PC-9 (cell line): ENCODE measurements at regions of chr13 and their contacts with region 1.

Region 1: GRCh38 chr13:40682449-40683240 is 16.2 kb upstream of the FOXO1 start:
- DNase-seq: no peak
- H3K4me3 ChIP-seq: no peak overlapping the region
- H3K27ac ChIP-seq: no peak overlapping the region
- H3K4me1 ChIP-seq: no peaks in the 10 kb centered on the region
- H3K27me3 ChIP-seq: no peaks in the 10 kb centered on the region
- CTCF ChIP-seq: peak; percentile 80

Region 2: DNA sequence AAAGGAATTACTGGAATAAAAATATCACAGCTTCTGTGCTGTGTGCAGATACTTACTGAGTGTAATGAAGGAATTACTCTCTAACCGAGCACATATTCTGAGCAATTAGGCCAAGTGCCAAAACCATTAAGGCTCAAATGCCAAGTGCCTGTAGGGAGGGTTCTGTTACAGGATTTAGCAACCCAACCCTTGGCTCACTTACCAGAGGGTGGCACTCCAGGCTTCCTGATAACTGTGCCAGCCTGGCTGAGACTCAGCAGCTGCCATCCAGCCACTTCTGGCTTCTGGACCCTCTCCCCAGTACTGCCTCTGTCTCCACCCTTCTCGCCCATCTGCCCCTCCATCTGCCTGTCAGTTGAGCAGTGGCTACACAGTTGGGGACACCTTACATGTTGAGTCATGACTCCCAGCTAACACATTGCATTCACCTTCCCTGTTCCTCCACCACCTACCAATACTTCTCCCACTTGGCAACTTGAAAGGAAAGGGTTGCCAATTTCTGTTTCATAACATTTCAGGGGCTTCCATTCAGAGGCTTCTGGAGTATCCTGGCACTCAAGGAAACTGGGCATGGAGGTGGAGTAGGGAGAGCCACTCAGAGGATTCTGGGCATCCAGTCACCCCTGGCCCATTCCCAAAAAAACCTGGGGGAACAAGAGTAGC is 916.7 kb before region 1 on chr13:
- CTCF ChIA-PET with region 1: no interaction called
- POLR2A ChIA-PET with region 1: no interaction called
- intact Hi-C with region 1: loop called (anchors 5 kb)
- DNase-seq: peak in 1 of 2 experiments; percentile 15
- H3K4me3 ChIP-seq: no peak overlapping the region
- H3K27ac ChIP-seq: no peak overlapping the region
- H3K4me1 ChIP-seq: no peaks in the 10 kb centered on the region
- H3K27me3 ChIP-seq: no peaks in the 10 kb centered on the region
- CTCF ChIP-seq: peak; percentile 39; the same call in 1 of the 2 replicates

Region 3: DNA sequence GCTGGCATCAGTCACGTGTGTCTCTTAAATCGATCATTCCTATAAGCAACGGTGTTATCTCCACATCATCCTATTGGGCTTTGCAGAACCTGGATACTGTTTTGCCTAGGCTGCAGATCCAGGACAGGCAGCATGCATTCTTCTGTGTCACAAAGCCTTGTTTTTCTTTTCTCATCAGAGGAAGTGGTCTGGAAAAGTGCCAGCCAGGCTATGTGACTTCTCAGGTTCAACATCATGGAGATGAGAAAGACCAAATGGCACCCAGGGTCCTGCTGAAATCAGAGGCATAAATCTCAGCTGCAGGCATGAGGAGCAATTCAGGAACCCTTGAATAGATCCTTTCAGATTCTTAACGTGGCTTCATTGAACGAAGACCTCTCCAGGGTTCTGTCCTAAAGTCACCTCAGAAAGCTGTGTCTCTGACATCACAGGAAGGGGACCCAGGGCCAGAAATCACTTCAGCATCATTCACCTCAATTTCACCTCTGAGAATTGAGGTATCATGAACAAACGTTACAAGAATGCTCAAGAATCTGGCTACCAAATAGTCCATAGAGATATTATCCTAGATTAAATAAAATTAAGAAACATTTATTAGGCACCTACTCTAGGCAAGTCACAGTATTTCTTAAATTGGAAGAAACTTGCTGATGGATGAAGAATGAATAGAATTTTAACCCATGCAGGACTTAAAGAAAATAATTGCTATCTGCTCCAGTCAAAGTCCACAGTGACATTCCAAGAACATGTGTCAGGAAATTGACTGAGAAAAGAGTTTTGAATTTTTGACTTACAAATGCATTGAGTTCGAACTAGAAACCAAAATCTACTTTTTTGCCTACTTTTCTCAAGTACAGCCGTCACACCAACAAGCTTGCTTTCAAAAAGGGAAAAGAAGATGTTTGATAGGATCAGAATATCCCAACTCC is 903.0 kb before region 1 on chr13:
- CTCF ChIA-PET with region 1: no interaction called
- POLR2A ChIA-PET with region 1: no interaction called
- intact Hi-C with region 1: loop called (anchors 5 kb)
- DNase-seq: no peak
- H3K4me3 ChIP-seq: no peak overlapping the region
- H3K27ac ChIP-seq: no peak overlapping the region
- H3K4me1 ChIP-seq: no peaks in the 10 kb centered on the region; the same call in 1 of the 2 replicates
- H3K27me3 ChIP-seq: no peaks in the 10 kb centered on the region
- CTCF ChIP-seq: no peak

Region 4: DNA sequence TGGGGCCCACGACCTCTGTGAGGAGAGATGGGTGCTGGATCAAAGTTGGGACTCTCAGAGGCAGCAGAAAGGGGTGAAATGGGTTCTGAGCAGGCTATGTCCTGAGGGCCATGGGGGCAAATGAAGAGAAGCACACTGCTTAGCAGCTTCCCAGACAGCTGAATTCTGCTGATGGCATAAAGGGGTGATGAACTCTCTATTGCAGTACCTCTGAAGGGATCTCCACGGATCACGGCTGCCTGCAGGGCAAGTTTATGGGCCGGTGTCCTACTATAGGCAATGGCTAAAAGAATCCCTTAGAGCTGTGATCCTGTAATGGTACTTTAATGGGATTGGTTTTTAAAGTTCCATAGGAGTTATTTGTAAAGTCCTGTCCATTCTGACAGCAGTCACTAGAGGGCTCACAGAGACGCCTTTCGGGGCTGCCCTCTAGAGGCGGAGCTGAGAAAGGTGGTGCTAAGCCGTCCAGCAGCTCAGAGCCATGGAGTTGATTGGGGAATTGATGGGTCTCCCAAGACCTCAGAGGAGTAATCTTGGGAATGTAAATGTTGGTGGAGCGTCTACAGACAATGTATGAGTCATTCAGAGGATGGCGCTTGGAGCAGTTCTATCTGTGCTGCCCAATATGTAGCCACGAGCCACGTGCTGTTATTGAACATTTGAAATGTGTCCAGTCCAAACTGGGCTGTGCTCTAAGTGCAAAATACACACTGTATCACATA is 739.9 kb before region 1 on chr13:
- CTCF ChIA-PET with region 1: interaction called, 5 read pairs
- POLR2A ChIA-PET with region 1: no interaction called
- intact Hi-C with region 1: loop called (anchors 1 kb)
- DNase-seq: peak; percentile 53 to 59
- H3K4me3 ChIP-seq: no peak overlapping the region
- H3K27ac ChIP-seq: no peak overlapping the region
- H3K4me1 ChIP-seq: no peaks in the 10 kb centered on the region
- H3K27me3 ChIP-seq: no peaks in the 10 kb centered on the region
- CTCF ChIP-seq: peak; percentile 84

Region 5: DNA sequence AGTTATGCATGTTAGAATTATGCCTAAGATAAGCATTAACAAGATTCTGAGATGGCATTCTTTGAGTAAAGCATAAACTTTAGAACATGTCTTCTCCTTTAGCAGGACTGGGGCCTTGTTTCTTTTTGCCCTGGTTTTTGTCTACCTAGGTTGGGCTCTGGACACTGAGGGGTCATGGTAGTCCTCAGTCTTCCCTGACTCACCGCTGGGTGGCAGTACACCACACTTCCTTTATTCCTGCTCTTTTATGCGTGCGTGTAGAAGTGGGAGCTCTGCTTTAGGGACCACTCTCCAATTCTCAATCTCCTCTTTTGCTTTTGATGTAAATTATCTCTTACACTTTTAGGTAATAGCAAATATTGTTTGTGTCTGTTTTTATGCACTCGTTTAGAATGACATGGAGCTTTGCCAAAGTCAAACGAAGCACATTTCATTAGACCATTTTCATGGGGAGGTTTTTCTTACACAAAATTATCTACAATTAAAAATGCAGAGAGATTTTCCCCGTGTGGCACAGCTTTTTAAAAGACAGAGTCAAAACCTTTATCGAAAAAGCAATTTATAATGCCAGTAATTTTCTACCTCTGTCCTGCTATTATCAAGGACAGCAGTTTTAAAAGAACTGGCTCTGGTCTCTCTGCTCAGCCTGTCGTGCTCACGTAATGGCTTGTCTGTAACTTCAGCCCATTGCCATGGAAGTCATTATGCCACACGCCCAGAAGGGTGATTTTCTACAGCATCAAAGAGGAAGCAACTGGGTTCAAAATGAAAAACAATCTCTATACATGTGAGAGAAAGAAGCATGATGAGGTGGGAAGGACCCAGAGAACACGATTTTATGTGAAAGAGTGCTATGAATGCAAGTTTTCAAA is 613.2 kb before region 1 on chr13:
- CTCF ChIA-PET with region 1: no interaction called
- POLR2A ChIA-PET with region 1: no interaction called
- intact Hi-C with region 1: loop called (anchors 2 kb)
- DNase-seq: peak in 1 of 2 experiments; percentile 47
- H3K4me3 ChIP-seq: no peak overlapping the region
- H3K27ac ChIP-seq: no peak overlapping the region
- H3K4me1 ChIP-seq: no peaks in the 10 kb centered on the region
- H3K27me3 ChIP-seq: no peaks in the 10 kb centered on the region
- CTCF ChIP-seq: peak; percentile 77

Region 6: DNA sequence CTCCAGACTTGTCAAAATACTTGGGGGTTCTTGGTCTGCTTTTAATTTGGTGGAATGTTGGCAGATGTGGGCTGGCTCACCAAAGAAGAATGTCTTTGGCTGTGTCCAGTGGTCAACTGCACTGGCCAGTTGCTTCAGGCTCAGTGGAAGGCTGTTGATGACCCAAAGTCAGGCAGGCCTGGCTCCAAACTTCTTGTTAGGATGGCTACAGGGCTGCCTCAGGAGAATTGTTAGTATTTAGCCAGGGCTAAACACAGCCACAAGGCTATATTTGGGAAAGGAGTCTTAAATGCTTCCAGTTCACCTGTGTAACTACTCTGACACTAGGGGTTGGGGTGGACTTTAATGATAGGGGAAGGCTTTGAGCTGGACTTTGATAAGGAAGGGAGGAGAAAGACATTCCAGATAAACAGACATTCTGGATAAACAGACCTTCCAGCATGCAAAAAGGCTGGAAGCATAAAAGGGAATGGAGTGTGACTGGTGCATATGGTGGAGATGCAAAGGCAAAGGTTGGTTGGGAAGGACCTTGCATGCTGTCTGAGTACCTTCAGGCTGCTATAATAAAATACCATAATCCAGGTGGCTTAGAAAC is 133.0 kb before region 1 on chr13:
- CTCF ChIA-PET with region 1: no interaction called
- POLR2A ChIA-PET with region 1: no interaction called
- intact Hi-C with region 1: no loop called
- DNase-seq: no peak
- H3K4me3 ChIP-seq: no peak overlapping the region
- H3K27ac ChIP-seq: no peak overlapping the region
- H3K4me1 ChIP-seq: no peaks in the 10 kb centered on the region
- H3K27me3 ChIP-seq: no peaks in the 10 kb centered on the region
- CTCF ChIP-seq: no peak

Region 7: GRCh38 chr13:40671956-40672764 is 10.5 kb before region 1 on chr13:
- CTCF ChIA-PET with region 1: interaction called, 17 read pairs
- POLR2A ChIA-PET with region 1: interaction called, 13 read pairs
- intact Hi-C with region 1: no loop called
- DNase-seq: peak; percentile 49 to 81
- H3K4me3 ChIP-seq: peak overlapping the region; percentile 19; the same call in 1 of the 2 replicates
- H3K27ac ChIP-seq: peak overlapping the region; percentile 82
- H3K4me1 ChIP-seq: peaks cover 31% of the 10 kb centered on the region
- H3K27me3 ChIP-seq: no peaks in the 10 kb centered on the region
- CTCF ChIP-seq: no peak

Region 8: DNA sequence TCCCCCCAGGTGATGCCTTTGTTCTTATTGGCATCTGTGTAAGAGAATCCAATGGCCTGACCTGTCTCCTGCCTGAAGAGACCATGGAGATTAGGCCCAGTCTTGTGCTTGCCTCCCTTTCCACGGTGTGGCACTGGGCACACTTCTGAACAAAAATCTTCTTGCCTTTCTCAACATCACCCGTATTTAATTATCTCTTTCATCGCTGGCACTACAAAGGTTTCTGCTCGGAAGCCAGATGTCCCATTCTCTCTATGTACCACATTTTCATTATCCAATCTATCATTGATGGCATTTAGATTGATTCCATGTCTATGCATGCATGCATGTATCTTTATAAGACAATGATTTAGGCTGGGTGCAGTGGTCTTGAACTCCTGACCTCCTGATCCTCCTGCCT is 181.1 kb after region 1 on chr13:
- CTCF ChIA-PET with region 1: no interaction called
- POLR2A ChIA-PET with region 1: no interaction called
- intact Hi-C with region 1: no loop called
- DNase-seq: no peak
- H3K4me3 ChIP-seq: no peak overlapping the region
- H3K27ac ChIP-seq: no peak overlapping the region
- H3K4me1 ChIP-seq: no peaks in the 10 kb centered on the region
- H3K27me3 ChIP-seq: no peaks in the 10 kb centered on the region
- CTCF ChIP-seq: no peak